Spleen (tissue), 13 donors: ENCODE measurements at regions of chr12 and their contacts with region 1.

Region 1: DNA sequence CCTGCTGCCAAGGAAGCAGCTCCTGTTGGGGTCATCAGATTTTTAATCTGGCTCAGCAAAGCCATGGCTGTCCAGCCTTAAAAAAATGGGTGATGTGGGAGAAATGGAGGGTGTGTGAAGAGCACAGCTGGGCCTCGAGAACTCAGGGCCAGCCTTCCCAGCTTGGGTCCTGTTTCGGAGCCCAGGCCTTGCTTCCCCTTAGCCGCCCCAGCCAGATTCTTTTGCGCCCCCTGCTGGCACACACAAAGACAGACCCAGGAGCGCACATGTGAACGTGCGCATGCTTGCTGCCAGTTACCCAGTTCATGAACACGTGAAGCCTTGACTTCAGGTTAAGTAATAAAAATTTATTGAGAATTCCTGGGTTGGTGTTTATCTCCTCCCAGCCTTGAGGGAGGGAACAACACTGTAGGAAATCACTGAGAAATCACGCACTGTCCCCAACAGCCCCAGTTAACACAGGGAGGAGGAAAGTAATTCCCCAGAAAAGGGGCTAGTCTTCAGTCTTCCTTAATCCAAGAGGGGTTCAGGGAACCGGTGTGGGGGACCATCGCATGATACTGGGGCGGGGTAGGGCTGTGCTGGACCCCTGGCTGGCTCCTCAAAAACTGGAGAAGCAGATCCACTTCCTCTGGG is 5.3 kb downstream of the PHB2 start:
- DNase-seq: peak; percentile 97
- H3K4me3 ChIP-seq: no peak overlapping the region
- H3K27ac ChIP-seq: peak overlapping the region; percentile 46 to 99 (median 80)
- H3K4me1 ChIP-seq: peaks cover 43 to 90% (median 70%) of the 10 kb centered on the region in 6 donors
- H3K27me3 ChIP-seq: no peaks in the 10 kb centered on the region
- CTCF ChIP-seq: peak; percentile 88 to 97 (median 94)
- POLR2A ChIP-seq: no peak

Region 2: GRCh38 chr12:6851921-6852650 is 113.1 kb before region 1 on chr12 and contains the start of gene USP5:
- intact Hi-C with region 1: no loop called
- DNase-seq: peak; percentile 100
- H3K4me3 ChIP-seq: peak within 1 kb of the TSS; percentile 49 to 95 (median 68)
- H3K27ac ChIP-seq: peak within 1 kb of the TSS; percentile 82 to 98 (median 97)
- H3K4me1 ChIP-seq: peaks cover 14 to 45% (median 25%) of the 10 kb centered on the region in 6 donors
- H3K27me3 ChIP-seq: no peaks in the 10 kb centered on the region
- CTCF ChIP-seq: peak in 7 of 11 experiments; percentile 3 to 52 (median 18)
- POLR2A ChIP-seq: peak in 1 of 3 donors; percentile 79
- total RNA-seq, gene USP5: 29.8 to 62.4 (median 53.5) TPM

Region 3: DNA sequence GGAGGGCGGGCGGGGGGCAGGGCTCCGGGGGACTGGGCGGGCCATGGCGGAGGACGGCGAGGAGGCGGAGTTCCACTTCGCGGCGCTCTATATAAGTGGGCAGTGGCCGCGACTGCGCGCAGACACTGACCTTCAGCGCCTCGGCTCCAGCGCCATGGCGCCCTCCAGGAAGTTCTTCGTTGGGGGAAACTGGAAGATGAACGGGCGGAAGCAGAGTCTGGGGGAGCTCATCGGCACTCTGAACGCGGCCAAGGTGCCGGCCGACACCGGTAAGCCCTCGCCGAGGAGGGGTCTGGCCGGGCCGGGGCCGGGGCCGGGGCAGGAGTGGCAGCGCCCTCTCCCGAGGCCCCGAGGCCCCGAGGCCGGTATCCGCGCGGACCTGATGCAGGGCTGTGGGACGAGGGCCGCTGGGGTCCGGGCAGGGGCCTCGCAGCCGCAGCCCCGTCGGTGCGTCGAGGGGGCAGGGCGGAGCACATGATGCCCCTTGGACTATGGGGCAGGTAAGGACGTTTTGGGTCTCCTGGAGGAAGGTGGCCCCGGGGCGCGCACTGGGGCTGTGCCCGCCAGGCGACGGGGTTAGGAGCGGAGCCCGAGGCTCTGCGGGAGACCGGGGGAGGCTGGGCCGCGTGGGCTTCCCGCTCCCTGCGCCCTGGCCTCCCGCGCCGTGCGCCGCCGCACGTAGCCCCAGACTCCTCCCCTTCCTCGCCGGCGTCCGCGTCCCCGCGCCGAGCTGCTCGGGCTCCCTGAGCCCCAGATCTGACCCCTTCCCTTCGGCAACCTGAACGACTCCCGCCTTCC is 97.5 kb before region 1 on chr12 and contains the start of gene TPI1:
- intact Hi-C with region 1: loop called (anchors 10 kb)
- DNase-seq: peak; percentile 92
- H3K4me3 ChIP-seq: peak within 1 kb of the TSS; percentile 89 to 100 (median 99)
- H3K27ac ChIP-seq: peak within 1 kb of the TSS; percentile 89 to 99 (median 98)
- H3K4me1 ChIP-seq: peaks cover 31 to 61% (median 53%) of the 10 kb centered on the region in 6 donors
- H3K27me3 ChIP-seq: no peaks in the 10 kb centered on the region
- CTCF ChIP-seq: peak in 1 of 11 experiments; percentile 2
- POLR2A ChIP-seq: peak; percentile 87 to 97 (median 94)
- total RNA-seq, gene TPI1: 218 to 471 (median 288) TPM

Region 4: DNA sequence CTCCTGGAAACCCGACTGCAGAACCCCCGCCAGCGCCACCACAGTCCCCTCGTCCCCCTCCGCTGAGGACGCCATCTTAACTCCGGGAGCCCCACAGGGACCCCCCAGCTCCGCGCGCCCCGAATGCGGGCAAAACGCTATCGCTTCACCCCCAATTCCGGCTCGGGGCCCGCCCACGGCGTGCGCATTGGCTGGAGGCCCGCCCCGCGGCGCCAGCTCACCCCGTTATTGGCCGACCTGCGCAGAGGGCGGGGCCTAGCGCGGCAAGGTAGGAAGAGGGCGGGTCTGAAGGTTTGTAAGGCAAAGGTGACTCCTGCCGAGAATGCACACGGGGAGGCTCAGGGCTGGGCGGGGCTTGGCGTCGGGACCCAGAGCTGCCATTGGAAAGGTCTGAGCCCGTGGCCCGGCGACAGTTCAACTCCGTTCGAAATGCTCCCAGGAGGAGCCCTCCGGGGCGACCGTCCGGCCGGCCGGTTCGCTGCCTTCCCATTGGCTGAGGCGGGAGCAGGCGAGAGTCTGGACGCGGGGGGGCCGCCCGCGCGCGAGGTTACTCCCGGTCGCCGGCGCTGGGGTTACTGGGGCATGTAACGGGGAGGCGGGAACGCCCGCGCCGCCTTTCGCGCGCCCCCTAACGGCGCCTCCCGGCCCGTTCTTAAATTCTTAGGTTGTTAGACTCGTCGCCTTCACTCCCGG is 53.4 kb after region 1 on chr12 and contains the start of gene LPCAT3:
- intact Hi-C with region 1: loop called (anchors 10 kb)
- DNase-seq: peak; percentile 99
- H3K4me3 ChIP-seq: peak within 1 kb of the TSS; percentile 56 to 87 (median 77)
- H3K27ac ChIP-seq: peak within 1 kb of the TSS; percentile 87 to 98 (median 92)
- H3K4me1 ChIP-seq: peaks cover 12 to 44% (median 27%) of the 10 kb centered on the region in 6 donors
- H3K27me3 ChIP-seq: no peaks in the 10 kb centered on the region
- CTCF ChIP-seq: peak; percentile 64 to 95 (median 87)
- POLR2A ChIP-seq: peak in 2 of 3 donors; percentile 30 to 78
- total RNA-seq, gene LPCAT3: 28.8 to 52.5 (median 40.8) TPM

Region 5: GRCh38 chr12:7092229-7092985 is 127.3 kb after region 1 on chr12 and contains the start of gene C1R:
- intact Hi-C with region 1: no loop called
- DNase-seq: peak; percentile 86
- H3K4me3 ChIP-seq: peak within 1 kb of the TSS; percentile 36 to 71 (median 49)
- H3K27ac ChIP-seq: peak within 1 kb of the TSS; percentile 27 to 82 (median 76)
- H3K4me1 ChIP-seq: peaks cover 0 to 58% (median 25%) of the 10 kb centered on the region in 6 donors
- H3K27me3 ChIP-seq: no peaks in the 10 kb centered on the region
- CTCF ChIP-seq: peak; percentile 79 to 96 (median 93)
- POLR2A ChIP-seq: no peak
- total RNA-seq, gene C1R: 188 to 421 (median 289) TPM